Left lung (tissue), 14 donors: ENCODE measurements at regions of chr4 and their contacts with region 1.

Region 1: GRCh38 chr4:21790438-21791029 is 158.0 kb downstream of the KCNIP4 start:
- DNase-seq: peak in 1 of 4 donors; percentile 30
- ATAC-seq: peak; percentile 31
- H3K4me3 ChIP-seq: no peak overlapping the region
- H3K27ac ChIP-seq: no peak overlapping the region
- H3K4me1 ChIP-seq: no peaks in the 10 kb centered on the region
- H3K27me3 ChIP-seq: no peaks in the 10 kb centered on the region
- CTCF ChIP-seq: peak; percentile 23 to 33

Region 2: GRCh38 chr4:21512353-21512752 is 278.2 kb before region 1 on chr4:
- intact Hi-C with region 1: no loop called
- DNase-seq: peak in 2 of 4 donors; percentile 26 to 51
- ATAC-seq: peak; percentile 78
- H3K4me3 ChIP-seq: no peak overlapping the region
- H3K27ac ChIP-seq: no peak overlapping the region
- H3K4me1 ChIP-seq: no peaks in the 10 kb centered on the region
- H3K27me3 ChIP-seq: no peaks in the 10 kb centered on the region
- CTCF ChIP-seq: no peak

Region 3: DNA sequence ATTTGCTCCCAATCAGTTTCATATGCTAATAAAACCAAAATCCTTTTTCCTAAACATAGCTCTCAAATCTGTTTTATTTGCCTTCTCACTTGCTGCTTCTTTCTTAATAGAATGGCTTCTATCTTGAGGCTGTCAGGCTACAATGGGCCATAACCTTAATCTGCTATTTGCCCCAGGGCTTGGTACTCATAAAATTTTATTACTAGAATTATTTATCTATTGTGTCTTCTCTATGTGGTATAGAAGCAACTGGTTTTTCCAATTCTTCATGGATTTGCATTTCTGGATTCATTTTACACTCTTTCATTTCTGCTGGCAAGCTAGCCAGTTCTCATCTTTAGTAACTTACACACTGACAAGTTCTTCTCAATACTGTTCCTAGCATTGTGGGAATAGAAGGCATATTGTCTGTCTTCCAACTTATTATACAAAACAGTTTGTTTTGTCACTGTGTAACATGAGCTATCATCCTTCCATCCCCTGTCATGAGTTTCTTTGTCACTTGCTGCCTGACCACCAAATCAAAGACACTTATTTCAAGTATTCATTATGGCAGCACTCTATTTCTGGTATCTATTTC is 254.6 kb after region 1 on chr4:
- intact Hi-C with region 1: no loop called
- DNase-seq: no peak
- ATAC-seq: no peak
- H3K4me3 ChIP-seq: no peak overlapping the region
- H3K27ac ChIP-seq: no peak overlapping the region
- H3K4me1 ChIP-seq: no peaks in the 10 kb centered on the region
- H3K27me3 ChIP-seq: no peaks in the 10 kb centered on the region
- CTCF ChIP-seq: no peak

Region 4: DNA sequence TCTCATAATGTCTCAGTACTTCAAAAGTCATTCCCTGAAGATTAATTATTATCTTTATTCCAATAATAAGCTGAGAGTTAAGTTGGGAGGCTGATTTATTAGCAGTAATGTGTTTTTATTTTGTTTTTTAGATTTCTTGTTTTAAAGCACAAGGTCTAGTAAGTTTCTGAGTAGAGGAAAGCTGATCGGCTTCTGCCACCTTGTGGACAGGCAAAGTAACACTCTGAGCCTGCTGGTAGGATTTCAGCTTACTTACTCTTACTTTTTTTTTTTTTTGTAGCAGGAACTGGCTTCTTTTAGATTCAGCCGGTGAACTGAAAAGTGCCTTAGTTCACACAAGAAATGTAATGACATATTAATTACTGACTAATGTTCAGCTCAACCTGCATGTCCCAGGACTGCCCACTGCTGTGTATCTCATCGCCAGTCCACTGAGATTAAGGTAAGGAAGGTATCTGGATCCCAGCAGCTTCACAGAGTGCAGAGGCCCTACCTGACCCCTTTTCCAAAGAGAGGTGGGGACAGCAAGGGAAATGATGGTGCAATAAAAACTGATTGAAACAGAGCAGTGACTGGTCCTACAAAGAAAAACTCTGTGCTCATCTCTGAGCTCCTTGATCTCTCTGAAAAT is 598.8 kb after region 1 on chr4:
- intact Hi-C with region 1: loop called in 1 of 2 experiments (anchors 10 kb)
- DNase-seq: peak in 2 of 4 donors; percentile 42 to 77
- ATAC-seq: peak; percentile 76
- H3K4me3 ChIP-seq: no peak overlapping the region
- H3K27ac ChIP-seq: no peak overlapping the region
- H3K4me1 ChIP-seq: no peaks in the 10 kb centered on the region
- H3K27me3 ChIP-seq: no peaks in the 10 kb centered on the region
- CTCF ChIP-seq: peak; percentile 67 to 68